ENCODE measurements at regions of chr12 and their contacts with region 1.

Region 1: DNA sequence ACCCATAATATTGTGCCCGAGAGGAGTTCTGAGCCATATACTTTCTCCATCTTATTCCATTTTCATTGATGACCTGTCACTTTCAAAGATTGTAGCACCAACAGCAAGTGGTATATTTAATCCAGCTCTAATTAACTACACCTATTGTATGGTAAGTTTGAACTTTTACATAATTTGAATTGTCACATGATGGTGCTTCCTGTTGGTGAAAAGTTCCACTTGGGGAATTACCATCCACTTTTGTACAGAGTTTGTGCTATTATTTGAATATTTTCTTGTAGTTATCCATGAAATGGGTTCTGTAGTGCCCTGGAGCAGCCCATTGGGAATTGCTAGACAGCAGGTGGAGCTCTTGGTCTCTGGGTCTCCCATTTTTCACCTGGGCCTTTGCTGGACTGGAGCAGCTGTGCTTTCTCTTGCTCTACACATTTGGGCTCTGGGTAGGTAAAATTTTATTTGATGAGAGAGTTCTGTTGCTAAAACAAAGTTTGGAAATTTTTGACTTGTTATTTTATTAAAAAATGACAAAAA is 3.0 kb downstream of the SMCO3 start:
- DNase-seq: no peak
- H3K4me3 ChIP-seq: no peak overlapping the region
- H3K27ac ChIP-seq: no peak overlapping the region
- H3K4me1 ChIP-seq: no peaks in the 10 kb centered on the region
- H3K27me3 ChIP-seq: no peaks in the 10 kb centered on the region
- CTCF ChIP-seq: peak; percentile 21 to 63 (median 62)
- EP300 ChIP-seq: no peak
- POLR2A ChIP-seq: no peak
- RAD21 ChIP-seq: peak; percentile 70 to 81

Region 2: GRCh38 chr12:14824012-14824634 is 13.1 kb after region 1 on chr12:
- CTCF ChIA-PET with region 1: interaction called, 14 read pairs
- POLR2A ChIA-PET with region 1: interaction called, 3 read pairs
- DNase-seq: no peak
- H3K4me3 ChIP-seq: no peak overlapping the region
- H3K27ac ChIP-seq: no peak overlapping the region
- H3K4me1 ChIP-seq: no peaks in the 10 kb centered on the region; a peak in 2 of 7 replicates
- H3K27me3 ChIP-seq: no peaks in the 10 kb centered on the region
- CTCF ChIP-seq: no peak
- EP300 ChIP-seq: no peak
- POLR2A ChIP-seq: no peak
- RAD21 ChIP-seq: no peak

Region 3: GRCh38 chr12:14845350-14845750 is 34.3 kb after region 1 on chr12:
- CTCF ChIA-PET with region 1: interaction called, 12 read pairs
- POLR2A ChIA-PET with region 1: no interaction called
- DNase-seq: no peak
- H3K4me3 ChIP-seq: no peak overlapping the region
- H3K27ac ChIP-seq: no peak overlapping the region
- H3K4me1 ChIP-seq: no peaks in the 10 kb centered on the region
- H3K27me3 ChIP-seq: no peaks in the 10 kb centered on the region
- CTCF ChIP-seq: peak in 2 of 3 experiments; percentile 55 to 58; a peak in 2 of 4 replicates
- EP300 ChIP-seq: no peak
- POLR2A ChIP-seq: no peak
- RAD21 ChIP-seq: peak; percentile 90 to 93

Region 4: DNA sequence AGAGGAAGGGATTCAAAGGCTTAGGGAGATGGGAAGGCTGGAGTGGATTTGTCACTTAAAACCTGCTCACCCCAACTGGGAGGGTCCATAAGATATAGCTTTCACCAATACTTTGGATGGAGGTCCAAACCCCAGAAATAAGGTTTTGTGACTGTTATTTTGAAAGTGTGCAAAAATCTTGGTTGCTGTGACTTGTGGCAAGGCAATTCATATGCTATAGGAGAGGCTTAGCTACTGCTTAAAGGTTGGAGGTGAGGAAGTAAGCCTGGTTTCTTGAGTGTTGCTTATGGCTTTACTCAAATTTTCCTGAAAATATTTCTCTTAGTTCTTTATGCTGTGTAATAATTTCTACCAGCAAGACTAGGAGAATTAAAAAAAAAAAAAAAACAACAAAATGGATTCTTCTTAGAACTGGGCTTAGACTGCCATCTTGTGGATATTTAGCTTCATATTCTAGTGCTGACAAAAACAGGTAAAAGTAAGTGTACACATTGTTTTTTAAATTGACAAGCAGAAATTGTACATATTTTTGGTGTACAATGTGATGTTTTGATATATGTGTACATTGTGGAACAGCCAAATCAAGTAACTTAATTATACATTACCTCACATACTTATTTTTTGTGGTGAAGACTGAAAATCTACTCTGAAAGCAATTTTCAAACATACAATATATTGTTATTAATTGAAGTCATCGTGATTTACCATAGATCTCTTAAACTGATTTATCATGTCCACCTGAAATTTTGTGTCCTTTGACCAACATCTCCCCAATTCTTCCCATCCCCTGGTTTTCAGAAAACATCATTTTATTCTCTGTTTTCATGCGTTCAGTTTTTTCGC is 184.8 kb after region 1 on chr12:
- CTCF ChIA-PET with region 1: interaction called, 35 read pairs
- POLR2A ChIA-PET with region 1: no interaction called
- DNase-seq: no peak
- H3K4me3 ChIP-seq: no peak overlapping the region
- H3K27ac ChIP-seq: no peak overlapping the region
- H3K4me1 ChIP-seq: no peaks in the 10 kb centered on the region
- H3K27me3 ChIP-seq: no peaks in the 10 kb centered on the region
- CTCF ChIP-seq: peak in 2 of 3 experiments; percentile 40 to 43; a peak in 2 of 4 replicates
- EP300 ChIP-seq: no peak
- POLR2A ChIP-seq: no peak
- RAD21 ChIP-seq: peak in 1 of 2 experiments; percentile 77

Region 5: GRCh38 chr12:15001733-15002382 is 190.8 kb after region 1 on chr12:
- CTCF ChIA-PET with region 1: interaction called, 10 read pairs
- POLR2A ChIA-PET with region 1: no interaction called
- DNase-seq: peak; percentile 33 to 54
- H3K4me3 ChIP-seq: no peak overlapping the region
- H3K27ac ChIP-seq: no peak overlapping the region
- H3K4me1 ChIP-seq: peaks cover 2 to 8% (median 3%) of the 10 kb centered on the region in 4 experiments; a peak in 4 of 7 replicates
- H3K27me3 ChIP-seq: no peaks in the 10 kb centered on the region
- CTCF ChIP-seq: no peak
- EP300 ChIP-seq: no peak
- POLR2A ChIP-seq: no peak
- RAD21 ChIP-seq: peak; percentile 30 to 44; a peak in 3 of 4 replicates

Measured in H1 (cell line).